ENCODE measurements at regions of chr7 and their contacts with region 1.

Region 1: GRCh38 chr7:30974605-30975255 is 11.0 kb downstream of the GHRHR start:
- DNase-seq: peak; percentile 60
- ATAC-seq: peak; percentile 95
- H3K4me3 ChIP-seq: no peak overlapping the region
- H3K27ac ChIP-seq: no peak overlapping the region
- H3K4me1 ChIP-seq: peaks cover 11% of the 10 kb centered on the region
- H3K27me3 ChIP-seq: no peaks in the 10 kb centered on the region; a peak in 1 of 5 replicates
- CTCF ChIP-seq: peak; percentile 87
- EP300 ChIP-seq: no peak
- POLR2A ChIP-seq: no peak
- RAD21 ChIP-seq: peak; percentile 65; the same call in 1 of the 2 replicates

Region 2: DNA sequence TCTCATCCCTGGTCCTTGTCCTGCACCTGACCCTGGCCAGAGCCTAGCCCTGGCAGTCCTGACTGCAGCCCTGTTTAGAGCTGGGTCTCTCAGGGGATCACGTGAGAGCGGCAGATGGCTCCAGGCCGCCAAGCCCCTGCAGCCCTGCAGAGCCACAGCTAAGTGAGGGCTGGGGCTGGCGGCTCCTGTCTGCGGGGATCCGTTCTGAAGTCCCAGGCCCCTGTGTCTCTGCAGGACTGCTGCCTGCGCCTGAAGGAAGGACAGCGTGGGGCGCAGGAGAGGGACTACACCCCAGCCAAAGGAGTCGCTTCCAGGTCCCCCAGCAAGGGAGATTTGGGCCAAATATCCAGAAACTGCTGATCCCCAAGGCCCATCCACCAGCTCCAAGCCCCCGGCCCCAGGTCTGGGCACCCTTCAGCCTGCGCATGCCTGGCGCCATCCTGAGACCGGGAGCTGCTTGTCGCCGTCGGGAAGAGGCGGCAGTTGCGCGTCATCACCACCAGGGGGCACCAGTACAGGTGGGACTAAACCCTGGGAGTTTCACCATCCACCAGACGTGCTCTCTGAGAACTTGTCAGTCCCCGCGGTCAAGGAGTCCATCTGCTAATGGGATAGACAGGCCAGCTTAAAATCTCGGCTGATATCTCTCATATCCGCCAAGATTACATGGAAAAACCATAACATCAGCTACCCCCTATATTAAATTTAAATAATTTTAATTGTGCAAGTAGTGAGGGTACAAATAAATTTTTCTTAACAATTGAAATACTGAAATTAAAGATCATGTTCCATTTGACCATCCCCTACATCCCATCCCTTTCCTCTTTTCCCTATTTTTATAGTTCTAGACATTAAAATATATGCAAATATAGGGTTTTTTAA is 36.1 kb before region 1 on chr7:
- CTCF ChIA-PET with region 1: interaction called, 9 read pairs
- POLR2A ChIA-PET with region 1: no interaction called
- in situ Hi-C with region 1: no loop called
- intact Hi-C with region 1: loop called (anchors 1 kb)
- DNase-seq: peak; percentile 61
- ATAC-seq: peak; percentile 97
- H3K4me3 ChIP-seq: no peak overlapping the region
- H3K27ac ChIP-seq: no peak overlapping the region
- H3K4me1 ChIP-seq: no peaks in the 10 kb centered on the region
- H3K27me3 ChIP-seq: peaks cover 0 to 2% of the 10 kb centered on the region in 2 experiments; a peak in 1 of 5 replicates
- CTCF ChIP-seq: peak; percentile 90
- EP300 ChIP-seq: no peak
- POLR2A ChIP-seq: no peak
- RAD21 ChIP-seq: no peak

Measured in HepG2 (cell line).